ENCODE measurements at regions of chr2 and their contacts with region 1.

Region 1: DNA sequence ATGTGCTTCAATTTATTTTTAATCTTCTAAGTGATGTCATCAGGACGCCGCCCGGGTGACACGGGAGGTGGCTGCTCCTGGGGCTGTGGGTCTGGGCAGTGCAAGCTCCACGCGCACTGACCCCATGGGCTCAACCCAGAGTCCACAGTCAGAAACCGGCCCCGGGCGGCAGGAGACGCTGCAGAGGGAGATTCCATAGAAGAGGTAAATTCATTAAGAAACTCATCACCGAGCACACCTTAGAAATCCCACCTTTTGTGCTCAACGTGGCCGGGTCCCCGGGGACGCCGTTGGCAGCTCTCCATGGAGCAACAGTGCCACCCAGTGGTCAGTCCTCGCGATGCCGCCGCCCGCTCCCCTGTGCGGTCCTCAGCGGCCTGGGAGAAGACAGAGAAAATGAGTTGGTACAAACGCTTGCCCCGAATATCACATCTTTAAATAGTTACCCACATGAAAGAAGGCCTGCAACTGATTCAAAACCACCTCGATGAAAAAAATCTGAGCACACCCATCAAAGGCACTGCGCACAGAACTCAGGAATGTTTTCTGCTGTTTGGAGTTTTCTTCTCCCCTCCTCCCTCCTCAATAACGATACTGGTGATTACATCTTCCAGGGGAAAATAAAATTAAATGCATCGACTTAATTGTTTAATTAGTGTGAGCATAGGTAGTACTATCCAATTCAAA is 92.6 kb downstream of the CMPK2 start:
- DNase-seq: peak; percentile 54
- H3K4me3 Mint-ChIP-seq: no peak overlapping the region
- H3K27ac Mint-ChIP-seq: no peak overlapping the region
- H3K4me1 Mint-ChIP-seq: no peaks in the 10 kb centered on the region
- H3K27me3 Mint-ChIP-seq: peaks cover 23% of the 10 kb centered on the region

Region 2: DNA sequence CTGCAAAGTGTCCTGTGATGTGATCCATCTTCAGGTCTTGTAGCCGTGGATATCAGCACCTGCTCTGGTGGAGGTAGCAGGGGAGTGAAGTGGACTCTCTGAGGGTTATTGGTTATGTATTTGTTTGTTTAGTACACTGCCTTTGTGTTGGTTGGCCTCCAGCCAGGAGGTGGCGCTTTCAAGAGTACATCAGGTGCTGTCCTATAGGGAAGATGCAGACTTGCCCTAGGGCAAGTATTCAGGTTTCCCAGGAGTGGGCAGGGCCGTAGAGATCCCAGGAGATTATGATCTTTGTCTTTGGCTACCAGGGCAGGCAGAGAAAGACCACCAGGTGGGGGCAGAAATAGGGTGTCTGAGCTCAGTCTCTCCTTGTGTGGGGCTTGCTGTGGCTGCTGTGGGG is 669.2 kb before region 1 on chr2:
- intact Hi-C with region 1: loop called (anchors 5 kb)
- DNase-seq: no peak
- H3K4me3 Mint-ChIP-seq: no peak overlapping the region
- H3K27ac Mint-ChIP-seq: no peak overlapping the region
- H3K4me1 Mint-ChIP-seq: no peaks in the 10 kb centered on the region
- H3K27me3 Mint-ChIP-seq: no peaks in the 10 kb centered on the region

Region 3: GRCh38 chr2:7191932-7192331 is 418.8 kb after region 1 on chr2:
- intact Hi-C with region 1: no loop called
- DNase-seq: no peak
- H3K4me3 Mint-ChIP-seq: no peak overlapping the region
- H3K27ac Mint-ChIP-seq: no peak overlapping the region
- H3K4me1 Mint-ChIP-seq: peaks cover 8% of the 10 kb centered on the region
- H3K27me3 Mint-ChIP-seq: no peaks in the 10 kb centered on the region

Region 4: DNA sequence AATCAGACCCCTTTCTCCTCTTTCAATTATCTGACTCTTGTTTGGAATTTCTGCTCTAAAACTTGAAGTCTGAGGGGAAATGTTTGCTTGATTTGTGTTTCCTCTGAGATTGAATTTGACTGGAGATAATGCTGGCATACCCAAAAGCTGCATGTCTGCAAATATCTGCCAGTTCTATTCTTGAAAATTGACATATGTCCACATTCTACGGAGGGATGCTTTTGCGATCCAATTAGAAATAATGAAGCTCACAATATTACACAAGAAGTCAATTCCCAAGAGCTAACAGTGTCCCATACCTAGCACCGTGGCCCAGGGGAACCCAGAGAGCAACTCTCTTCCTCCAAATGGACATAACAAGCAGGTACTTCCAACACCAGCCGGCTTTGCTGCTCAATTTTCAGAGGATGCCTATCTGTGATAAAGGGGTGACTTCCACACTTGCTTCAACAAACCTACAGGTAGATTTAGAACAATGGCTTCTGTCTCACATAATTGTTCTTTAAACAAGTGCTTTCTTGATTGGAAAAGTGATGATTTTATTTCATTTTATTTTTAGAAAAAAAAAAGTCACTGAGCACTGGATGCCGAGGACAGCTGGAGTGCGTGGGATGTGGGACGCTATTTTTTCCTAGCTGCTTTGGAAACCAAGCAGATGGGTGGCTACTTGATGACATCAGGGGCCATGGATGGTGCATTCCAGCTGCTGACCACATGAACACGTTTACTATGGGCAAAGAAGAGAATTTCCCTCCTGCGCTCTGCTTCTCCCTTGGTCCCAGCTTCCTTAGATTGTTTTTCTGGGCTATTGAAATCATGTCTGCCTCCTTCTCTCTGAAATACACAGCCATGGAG is 632.9 kb after region 1 on chr2:
- intact Hi-C with region 1: no loop called
- DNase-seq: no peak
- H3K4me3 Mint-ChIP-seq: no peak overlapping the region
- H3K27ac Mint-ChIP-seq: no peak overlapping the region
- H3K4me1 Mint-ChIP-seq: peaks cover 5% of the 10 kb centered on the region
- H3K27me3 Mint-ChIP-seq: peaks cover 23% of the 10 kb centered on the region

Measured in activated T-helper 1 cell treated with anti-CD3 and anti-CD28 coated beads, Interleukin-12 subunit alpha, Interleukin-12 subunit beta, Interleukin-2, Interleukin-4 antibody, amounts not matched to agents 30 ng/mL and 10 ng/mL and 1 ng/mL, durations not matched to agents 14 hours and 24 hours and 36 hours (primary cell).